Panc1 (cell line): ENCODE measurements at regions of chr16 and their contacts with region 1.

Region 1: GRCh38 chr16:68503334-68503733 is 35.8 kb upstream of the ZFP90 start:
- DNase-seq: no peak
- ATAC-seq: no peak
- H3K4me3 ChIP-seq: no peak overlapping the region
- H3K27ac ChIP-seq: no peak overlapping the region
- H3K4me1 ChIP-seq: no peaks in the 10 kb centered on the region
- H3K27me3 ChIP-seq: no peaks in the 10 kb centered on the region
- CTCF ChIP-seq: no peak

Region 2: DNA sequence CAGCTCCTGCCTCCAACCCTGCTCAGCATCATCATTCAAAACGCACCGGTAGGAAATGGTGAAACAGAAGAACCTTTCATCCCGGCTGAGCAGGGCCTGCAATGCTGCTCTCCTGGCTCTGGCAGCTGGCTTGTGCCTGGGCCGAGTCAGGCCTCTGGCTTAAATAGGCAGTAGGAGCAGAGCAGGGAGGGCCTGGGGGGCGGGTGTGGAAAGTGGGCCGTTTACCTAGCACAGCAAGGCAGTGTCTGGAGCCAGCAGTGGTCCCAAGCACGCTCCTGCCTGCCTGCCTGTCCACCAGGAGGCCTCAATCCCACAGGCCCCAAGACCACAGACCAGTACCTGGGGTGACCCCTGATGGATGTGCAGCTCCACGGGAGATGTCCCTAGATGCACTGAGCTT is 114.3 kb before region 1 on chr16:
- CTCF ChIA-PET with region 1: no interaction called
- POLR2A ChIA-PET with region 1: no interaction called
- in situ Hi-C with region 1: no loop called
- intact Hi-C with region 1: no loop called
- DNase-seq: no peak
- ATAC-seq: no peak
- H3K4me3 ChIP-seq: no peak overlapping the region
- H3K27ac ChIP-seq: no peak overlapping the region
- H3K4me1 ChIP-seq: no peaks in the 10 kb centered on the region
- H3K27me3 ChIP-seq: no peaks in the 10 kb centered on the region
- CTCF ChIP-seq: no peak

Region 3: DNA sequence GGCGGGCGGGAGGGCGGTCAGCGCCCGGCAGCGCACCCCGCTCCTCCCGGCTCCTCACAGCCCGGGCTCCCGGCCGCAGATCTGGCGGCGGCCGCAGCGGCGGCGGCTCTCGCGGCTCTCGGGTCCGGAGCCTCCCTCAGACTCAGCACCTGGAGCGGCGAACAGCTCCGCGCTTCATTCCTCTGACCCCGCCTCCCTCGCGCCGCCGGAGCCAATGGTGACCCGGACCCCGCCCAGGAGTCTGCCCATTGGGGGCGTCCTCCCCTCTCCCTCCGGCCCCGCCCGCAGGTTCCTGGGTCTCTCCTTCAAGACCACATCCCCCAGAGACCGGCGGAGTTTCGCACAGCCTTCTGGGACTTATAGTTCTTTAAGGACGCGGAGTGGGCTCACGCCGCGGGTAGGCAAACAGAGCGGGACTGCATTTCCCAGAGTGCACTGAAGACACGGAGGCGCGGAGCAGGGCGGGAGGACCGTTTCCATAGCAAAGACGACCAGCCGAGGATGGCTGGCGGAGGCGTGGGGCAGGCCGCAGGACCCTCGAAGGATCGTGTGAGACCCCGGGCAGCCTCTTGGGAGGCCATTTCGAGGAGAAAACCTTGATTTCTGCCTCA is 54.9 kb before region 1 on chr16 and contains the start of gene SMPD3:
- CTCF ChIA-PET with region 1: no interaction called
- POLR2A ChIA-PET with region 1: no interaction called
- in situ Hi-C with region 1: no loop called
- intact Hi-C with region 1: loop called (anchors 10 kb)
- DNase-seq: peak; percentile 74
- ATAC-seq: peak; percentile 97
- H3K4me3 ChIP-seq: peak within 1 kb of the TSS; percentile 48 to 60
- H3K27ac ChIP-seq: peak within 1 kb of the TSS; percentile 39; the same call in 1 of the 2 replicates
- H3K4me1 ChIP-seq: no peaks in the 10 kb centered on the region
- H3K27me3 ChIP-seq: peaks cover 6% of the 10 kb centered on the region
- CTCF ChIP-seq: no peak
- total RNA-seq, gene SMPD3: 0.77 TPM

Region 4: DNA sequence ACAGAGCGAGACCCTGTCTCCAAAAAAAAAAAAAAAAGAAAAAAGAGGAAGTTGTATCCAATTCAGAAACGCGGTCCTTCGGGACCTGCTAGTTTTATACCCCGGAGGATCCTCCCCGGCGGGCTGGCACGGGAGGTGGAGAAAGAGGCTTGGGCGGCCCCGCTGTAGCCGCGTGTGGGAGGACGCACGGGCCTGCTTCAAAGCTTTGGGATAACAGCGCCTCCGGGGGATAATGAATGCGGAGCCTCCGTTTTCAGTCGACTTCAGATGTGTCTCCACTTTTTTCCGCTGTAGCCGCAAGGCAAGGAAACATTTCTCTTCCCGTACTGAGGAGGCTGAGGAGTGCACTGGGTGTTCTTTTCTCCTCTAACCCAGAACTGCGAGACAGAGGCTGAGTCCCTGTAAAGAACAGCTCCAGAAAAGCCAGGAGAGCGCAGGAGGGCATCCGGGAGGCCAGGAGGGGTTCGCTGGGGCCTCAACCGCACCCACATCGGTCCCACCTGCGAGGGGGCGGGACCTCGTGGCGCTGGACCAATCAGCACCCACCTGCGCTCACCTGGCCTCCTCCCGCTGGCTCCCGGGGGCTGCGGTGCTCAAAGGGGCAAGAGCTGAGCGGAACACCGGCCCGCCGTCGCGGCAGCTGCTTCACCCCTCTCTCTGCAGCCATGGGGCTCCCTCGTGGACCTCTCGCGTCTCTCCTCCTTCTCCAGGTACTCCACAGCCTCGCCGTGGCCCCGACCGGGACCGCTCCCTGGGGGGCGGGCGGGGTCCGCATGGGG is 141.6 kb after region 1 on chr16 and contains the start of gene CDH3:
- CTCF ChIA-PET with region 1: no interaction called
- POLR2A ChIA-PET with region 1: no interaction called
- in situ Hi-C with region 1: no loop called
- intact Hi-C with region 1: no loop called
- DNase-seq: no peak
- ATAC-seq: peak; percentile 65
- H3K4me3 ChIP-seq: peak within 1 kb of the TSS; percentile 32 to 64
- H3K27ac ChIP-seq: no peak within 1 kb of the TSS
- H3K4me1 ChIP-seq: peaks cover 13% of the 10 kb centered on the region
- H3K27me3 ChIP-seq: no peaks in the 10 kb centered on the region; the same call in 1 of the 2 replicates
- CTCF ChIP-seq: no peak
- total RNA-seq, gene CDH3: 16.7 TPM